GM10248 (cell line): ENCODE measurements at regions of chr13 and their contacts with region 1.

Region 1: DNA sequence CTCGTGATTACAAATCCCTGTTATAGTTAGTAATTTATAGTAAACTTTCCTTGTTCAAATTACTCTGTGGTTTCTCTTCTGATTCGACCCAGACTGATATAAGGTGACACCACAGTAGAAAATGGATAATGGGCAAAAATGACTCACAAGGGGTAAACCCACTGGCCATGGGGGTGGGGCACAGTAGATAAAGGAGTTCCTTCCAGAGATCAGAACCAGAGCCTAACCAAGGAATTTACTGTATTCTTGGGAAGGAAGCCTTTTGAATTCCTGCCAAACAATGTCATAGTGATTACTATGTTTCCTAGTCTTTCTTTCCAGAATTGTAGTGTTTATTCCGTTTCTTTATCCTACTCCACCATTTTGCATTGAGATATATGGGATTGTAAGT is 21.9 kb downstream of the MIR17HG start:
- DNase-seq: no peak
- CTCF ChIP-seq: no peak

Region 2: DNA sequence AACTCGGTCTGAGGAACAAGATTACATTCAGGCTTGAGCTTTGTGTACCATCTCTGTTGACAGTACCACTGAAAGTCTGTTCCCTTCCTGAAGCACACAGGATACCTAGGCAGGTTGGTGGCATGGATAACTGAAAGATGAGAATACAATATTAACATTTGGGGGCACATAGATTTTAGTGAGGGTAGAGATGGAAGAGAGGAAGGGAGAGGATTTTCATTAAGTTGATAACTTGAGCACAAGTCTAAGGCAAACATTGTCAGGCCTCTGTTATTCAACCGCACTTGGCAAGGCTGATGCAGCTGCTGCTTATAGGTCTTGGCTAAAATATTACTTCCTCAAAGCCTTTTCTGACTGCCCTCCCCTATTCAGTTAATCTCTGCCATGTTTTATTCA is 11.1 kb before region 1 on chr13:
- CTCF ChIA-PET with region 1: interaction called, 10 read pairs
- POLR2A ChIA-PET with region 1: no interaction called
- DNase-seq: no peak
- CTCF ChIP-seq: no peak